Esophagus muscularis mucosa (tissue), 4 donors: ENCODE measurements at regions of chr17 and their contacts with region 1.

Region 1: DNA sequence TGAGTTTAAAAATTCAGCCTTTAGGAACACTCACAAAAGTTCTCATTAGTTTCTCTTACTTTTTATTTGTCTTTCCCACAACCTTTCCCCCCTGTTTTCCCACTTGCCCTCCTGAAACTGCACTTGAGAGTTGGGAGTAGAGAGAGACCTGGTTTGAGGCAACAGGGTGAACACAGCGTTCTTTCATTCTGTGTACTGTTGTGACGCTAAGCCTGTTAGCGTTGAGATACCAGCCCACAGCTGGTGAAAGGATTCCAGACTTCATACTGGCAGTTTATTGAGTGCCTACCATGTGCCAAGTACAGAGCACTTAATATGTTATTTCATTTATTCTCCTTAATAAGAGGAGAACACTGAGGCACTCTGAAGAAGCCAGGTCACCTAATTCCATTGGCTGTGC is 10.3 kb downstream of the TNRC6C start:
- DNase-seq: no peak
- H3K4me3 ChIP-seq: no peak overlapping the region
- H3K27ac ChIP-seq: no peak overlapping the region
- H3K4me1 ChIP-seq: peaks cover 28 to 89% (median 75%) of the 10 kb centered on the region in 4 donors
- H3K27me3 ChIP-seq: no peaks in the 10 kb centered on the region
- CTCF ChIP-seq: no peak
- EP300 ChIP-seq: no peak
- POLR2A ChIP-seq: no peak

Region 2: GRCh38 chr17:77924757-77925336 is 43.9 kb before region 1 on chr17:
- intact Hi-C with region 1: no loop called
- DNase-seq: no peak
- H3K4me3 ChIP-seq: no peak overlapping the region
- H3K27ac ChIP-seq: no peak overlapping the region
- H3K4me1 ChIP-seq: peaks cover 0 to 10% (median 8%) of the 10 kb centered on the region in 4 donors
- H3K27me3 ChIP-seq: peaks cover 0 to 5% (median 0%) of the 10 kb centered on the region in 4 donors
- CTCF ChIP-seq: no peak
- EP300 ChIP-seq: no peak
- POLR2A ChIP-seq: no peak

Region 3: DNA sequence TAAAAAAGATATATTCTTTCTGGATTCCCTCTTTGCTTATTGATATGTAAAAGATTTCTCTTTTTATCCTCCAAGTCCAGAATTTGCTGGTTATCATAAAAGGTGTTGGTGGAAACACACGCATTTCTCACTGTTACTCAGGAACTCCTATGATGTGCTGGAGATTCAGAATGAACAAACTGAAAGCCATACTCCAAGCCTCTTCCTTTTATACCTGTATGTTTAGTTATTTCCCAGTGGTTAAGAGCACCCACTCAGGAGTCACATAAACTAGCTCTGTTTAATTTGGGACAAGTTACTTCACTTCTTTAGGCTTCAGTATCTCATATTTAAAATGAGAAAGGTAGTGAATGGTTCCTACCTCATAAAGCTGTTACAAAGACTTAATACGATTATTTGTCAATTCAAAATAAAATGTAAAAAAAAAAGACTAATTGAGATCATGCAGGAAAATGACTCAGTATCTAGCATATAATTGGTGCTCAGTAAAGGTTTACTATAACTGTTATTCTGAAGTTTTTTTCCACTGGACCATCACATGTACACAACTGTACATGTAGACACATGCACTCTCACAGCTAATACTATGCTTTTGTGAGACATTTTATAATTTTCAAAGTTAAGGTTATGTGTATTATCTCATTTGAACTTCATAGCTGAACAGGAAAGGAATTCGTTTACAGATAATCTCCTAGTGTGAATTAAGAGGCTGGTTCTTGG is 36.8 kb after region 1 on chr17:
- intact Hi-C with region 1: loop called (anchors 5 kb)
- DNase-seq: no peak
- H3K4me3 ChIP-seq: no peak overlapping the region
- H3K27ac ChIP-seq: no peak overlapping the region
- H3K4me1 ChIP-seq: peaks cover 17 to 33% (median 21%) of the 10 kb centered on the region in 4 donors
- H3K27me3 ChIP-seq: no peaks in the 10 kb centered on the region
- CTCF ChIP-seq: no peak
- EP300 ChIP-seq: no peak
- POLR2A ChIP-seq: no peak

Region 4: DNA sequence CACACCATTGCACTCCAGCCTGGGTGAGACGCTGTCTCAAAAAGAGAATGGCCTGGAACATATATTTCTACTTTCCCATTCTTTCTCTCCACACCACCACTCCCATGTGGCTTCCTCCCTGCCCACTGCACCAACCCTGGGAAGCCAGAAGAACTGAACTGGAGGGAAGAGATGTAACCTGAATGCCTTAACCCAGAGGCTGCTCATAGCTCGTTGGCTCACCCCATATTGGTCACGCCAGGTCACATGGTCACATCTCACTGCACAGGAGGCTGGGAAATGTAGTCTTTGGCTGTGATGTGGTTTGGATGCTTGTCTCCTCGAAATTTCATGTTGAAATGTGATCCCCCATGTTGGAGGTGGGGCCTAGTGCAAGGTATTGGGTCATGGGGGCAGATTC is 614.3 kb after region 1 on chr17:
- intact Hi-C with region 1: no loop called
- DNase-seq: no peak
- H3K4me3 ChIP-seq: no peak overlapping the region
- H3K27ac ChIP-seq: no peak overlapping the region
- H3K4me1 ChIP-seq: no peaks in the 10 kb centered on the region
- H3K27me3 ChIP-seq: peaks cover 0 to 5% (median 0%) of the 10 kb centered on the region in 4 donors
- CTCF ChIP-seq: no peak
- EP300 ChIP-seq: no peak
- POLR2A ChIP-seq: no peak